ENCODE measurements at regions of chr6 and their contacts with region 1.

Region 1: DNA sequence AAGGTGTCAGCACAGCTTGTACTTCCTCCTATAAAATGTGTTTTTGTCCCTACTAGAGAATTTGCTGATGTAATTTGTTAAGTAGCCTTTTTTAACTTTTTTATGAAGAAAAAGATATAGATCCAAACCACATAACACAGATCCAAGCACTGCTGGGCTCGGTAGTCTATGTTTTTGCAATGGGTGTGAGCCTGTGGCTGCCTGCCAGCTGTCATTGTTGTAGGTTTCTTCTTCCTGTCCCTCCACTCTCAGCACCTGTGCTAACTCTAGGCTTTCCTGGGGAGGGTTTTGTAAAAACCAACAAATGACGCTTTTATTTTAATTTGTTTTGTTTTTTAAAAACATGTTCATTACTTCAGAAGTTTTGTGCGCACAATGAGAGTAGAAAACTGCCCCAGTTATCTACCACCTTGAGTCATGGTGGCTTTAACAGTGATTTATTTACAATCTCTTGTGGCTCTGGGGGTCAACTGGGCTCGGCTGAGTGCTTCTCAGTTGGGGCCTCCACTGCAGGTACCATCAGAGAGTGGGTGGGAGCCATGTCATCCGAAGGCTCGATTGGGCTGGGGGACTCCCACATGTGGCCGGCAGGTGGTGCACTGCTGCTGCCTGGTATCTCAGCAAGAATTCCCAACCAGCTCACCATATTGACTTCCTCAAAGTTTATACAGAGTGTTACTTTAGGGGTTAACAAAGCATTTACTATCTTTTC is 3.1 kb upstream of the CCR6 start:
- DNase-seq: peak; percentile 65
- ATAC-seq: no peak
- H3K4me3 ChIP-seq: peak overlapping the region; percentile 2 to 88 (median 15)
- H3K4me3 Mint-ChIP-seq: peak overlapping the region; percentile 96
- H3K27ac ChIP-seq: peak overlapping the region; percentile 97 to 98
- H3K27ac Mint-ChIP-seq: peak overlapping the region; percentile 100
- H3K4me1 ChIP-seq: peaks cover 71 to 84% of the 10 kb centered on the region in 2 donors
- H3K4me1 Mint-ChIP-seq: peaks cover 85% of the 10 kb centered on the region
- H3K27me3 ChIP-seq: no peaks in the 10 kb centered on the region
- H3K27me3 Mint-ChIP-seq: no peaks in the 10 kb centered on the region
- CTCF ChIP-seq: peak; percentile 41

Region 2: GRCh38 chr6:166999145-166999883 is 120.5 kb before region 1 on chr6 and contains the start of gene CEP43:
- CTCF ChIA-PET with region 1: interaction called, 10 read pairs
- POLR2A ChIA-PET with region 1: interaction called, 9 read pairs
- intact Hi-C with region 1: loop called (anchors 2 kb)
- DNase-seq: peak; percentile 98
- ATAC-seq: peak; percentile 95
- H3K4me3 ChIP-seq: peak within 1 kb of the TSS; percentile 70 to 95 (median 91)
- H3K4me3 Mint-ChIP-seq: peak within 1 kb of the TSS; percentile 91
- H3K27ac ChIP-seq: peak within 1 kb of the TSS; percentile 31 to 83
- H3K27ac Mint-ChIP-seq: peak within 1 kb of the TSS; percentile 86
- H3K4me1 ChIP-seq: peaks cover 21 to 23% of the 10 kb centered on the region in 2 donors
- H3K4me1 Mint-ChIP-seq: peaks cover 29% of the 10 kb centered on the region
- H3K27me3 ChIP-seq: no peaks in the 10 kb centered on the region
- H3K27me3 Mint-ChIP-seq: no peaks in the 10 kb centered on the region
- CTCF ChIP-seq: no peak
- total RNA-seq, gene CEP43: 33.7 and 39.7 TPM in 2 replicates

Region 3: DNA sequence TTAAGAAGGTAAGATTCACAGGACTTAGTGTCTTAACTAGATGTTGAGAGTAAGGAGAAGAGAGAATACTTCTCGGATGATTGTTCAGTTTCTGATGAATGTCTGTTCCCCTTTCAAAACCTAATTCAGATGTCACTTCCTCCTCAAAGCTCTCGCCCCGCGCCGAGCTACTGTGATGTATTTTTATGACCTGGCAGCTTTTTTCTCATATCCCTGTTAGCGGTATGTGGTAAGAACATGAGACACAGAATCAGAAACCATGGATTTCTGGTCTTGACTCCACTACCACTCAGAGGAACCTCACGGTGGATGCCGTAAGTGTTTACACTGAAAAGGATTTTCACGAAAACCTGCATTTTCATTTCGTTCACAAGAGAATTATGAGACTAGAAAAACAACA is 72.3 kb before region 1 on chr6:
- CTCF ChIA-PET with region 1: interaction called, 10 read pairs
- POLR2A ChIA-PET with region 1: interaction called, 10 read pairs
- intact Hi-C with region 1: no loop called
- DNase-seq: peak; percentile 86
- ATAC-seq: peak; percentile 81
- H3K4me3 ChIP-seq: peak overlapping the region in 4 of 5 experiments; percentile 31 to 57 (median 44)
- H3K4me3 Mint-ChIP-seq: peak overlapping the region; percentile 57
- H3K27ac ChIP-seq: peak overlapping the region; percentile 70 to 88
- H3K27ac Mint-ChIP-seq: peak overlapping the region; percentile 79
- H3K4me1 ChIP-seq: peaks cover 36 to 47% of the 10 kb centered on the region in 2 donors
- H3K4me1 Mint-ChIP-seq: peaks cover 55% of the 10 kb centered on the region
- H3K27me3 ChIP-seq: no peaks in the 10 kb centered on the region
- H3K27me3 Mint-ChIP-seq: no peaks in the 10 kb centered on the region
- CTCF ChIP-seq: no peak

Region 4: DNA sequence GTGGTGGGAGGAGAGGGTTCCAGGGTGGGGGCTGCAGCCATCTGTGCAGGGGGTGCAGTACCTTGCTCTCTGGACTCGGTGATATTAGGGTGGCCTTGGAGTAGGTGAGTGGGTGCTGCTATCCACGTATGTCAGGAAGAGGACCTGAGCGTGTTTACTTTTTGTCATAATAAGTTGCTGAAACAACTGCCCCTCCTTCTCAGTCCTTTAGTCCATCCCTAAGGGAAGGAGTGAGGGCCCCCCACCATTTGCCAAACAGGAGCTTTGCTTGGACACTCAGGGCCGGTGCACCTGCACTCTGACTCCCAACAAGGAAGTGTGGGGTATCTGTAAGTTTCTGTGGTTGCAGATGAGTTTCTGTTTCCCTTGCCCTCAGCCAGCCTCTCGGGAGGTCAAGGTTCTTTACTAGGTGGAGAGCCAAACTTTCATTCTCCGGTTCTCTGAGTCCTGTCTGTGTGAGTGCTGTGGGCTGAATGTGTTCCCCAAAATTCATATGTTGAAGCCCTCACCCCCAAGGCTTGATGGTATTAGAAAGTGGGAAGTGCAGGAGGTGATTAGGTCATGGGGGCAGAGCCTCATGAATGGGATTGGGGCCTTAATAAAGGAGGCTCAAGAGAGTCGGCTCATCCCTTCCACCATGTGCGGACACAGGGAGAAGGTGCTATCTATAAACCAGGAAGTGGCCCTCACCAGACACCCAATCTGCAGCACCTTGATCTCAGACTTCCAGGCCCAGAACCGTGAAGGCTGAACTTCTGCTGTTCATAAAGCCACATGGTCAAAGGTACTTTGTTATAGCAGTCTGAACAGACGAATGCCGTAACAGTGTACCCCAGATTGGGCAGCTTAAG is 16.6 kb before region 1 on chr6:
- CTCF ChIA-PET with region 1: interaction called, 13 read pairs
- POLR2A ChIA-PET with region 1: interaction called, 432 read pairs
- intact Hi-C with region 1: no loop called
- DNase-seq: peak; percentile 84
- ATAC-seq: peak; percentile 74
- H3K4me3 ChIP-seq: peak overlapping the region in 2 of 5 experiments; percentile 2 to 7
- H3K4me3 Mint-ChIP-seq: peak overlapping the region; percentile 85
- H3K27ac ChIP-seq: peak overlapping the region; percentile 83 to 92
- H3K27ac Mint-ChIP-seq: peak overlapping the region; percentile 95
- H3K4me1 ChIP-seq: peaks cover 95 to 99% of the 10 kb centered on the region in 2 donors
- H3K4me1 Mint-ChIP-seq: peaks cover 95% of the 10 kb centered on the region
- H3K27me3 ChIP-seq: no peaks in the 10 kb centered on the region
- H3K27me3 Mint-ChIP-seq: no peaks in the 10 kb centered on the region
- CTCF ChIP-seq: no peak